CD4-positive, alpha-beta memory T cell (primary cell): ENCODE measurements at regions of chr6 and their contacts with region 1.

Region 1: DNA sequence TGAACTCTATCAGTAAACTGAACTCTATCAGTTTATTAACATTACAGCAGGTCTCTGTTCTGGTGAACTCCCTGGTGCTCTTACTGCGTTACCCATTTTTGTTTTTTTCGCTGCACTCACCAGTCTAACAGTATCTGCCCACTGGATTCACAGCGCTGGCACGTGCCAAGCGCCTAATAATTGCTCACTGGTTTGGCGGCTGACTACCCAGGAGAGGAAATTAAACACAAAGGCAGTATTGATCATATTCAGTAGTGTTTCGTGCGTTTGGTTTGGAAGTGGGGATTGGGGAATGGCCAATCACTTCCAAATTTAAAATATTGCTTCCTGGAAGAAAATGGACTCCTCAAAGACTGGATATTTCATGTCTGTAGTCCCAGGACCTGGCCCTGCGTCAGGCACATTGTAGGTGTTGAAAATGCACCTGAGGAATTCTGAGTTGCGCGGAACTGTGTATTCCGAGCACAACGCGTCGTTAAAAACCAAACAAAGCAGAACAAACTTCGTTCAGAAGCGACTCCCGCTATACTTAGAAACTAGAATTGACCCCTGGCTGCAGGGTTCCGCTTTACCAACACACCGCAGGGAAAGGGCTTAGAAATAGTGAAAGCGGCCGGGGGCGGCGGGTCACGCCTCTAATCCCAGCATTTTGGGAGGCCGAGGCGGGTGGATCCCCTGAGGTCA is 1.1 kb upstream of the RPS12 start:
- DNase-seq: peak; percentile 58 to 67 (median 64)
- H3K4me3 ChIP-seq: peak overlapping the region; percentile 78
- H3K4me3 Mint-ChIP-seq: peak overlapping the region; percentile 94 to 100 (median 98)
- H3K27ac ChIP-seq: peak overlapping the region; percentile 76
- H3K27ac Mint-ChIP-seq: peak overlapping the region; percentile 96 to 99 (median 98)
- H3K4me1 ChIP-seq: peaks cover 40% of the 10 kb centered on the region
- H3K4me1 Mint-ChIP-seq: peaks cover 28 to 58% (median 45%) of the 10 kb centered on the region in 4 donors
- H3K27me3 ChIP-seq: no peaks in the 10 kb centered on the region
- H3K27me3 Mint-ChIP-seq: peaks cover 0 to 2% of the 10 kb centered on the region in 2 donors

Region 2: GRCh38 chr6:132669690-132670291 is 143.5 kb before region 1 on chr6:
- CTCF ChIA-PET with region 1: interaction called, 6 read pairs
- POLR2A ChIA-PET with region 1: interaction called, 3 read pairs
- intact Hi-C with region 1: loop called (anchors 2 kb)
- DNase-seq: peak in 4 of 5 donors; percentile 22 to 39 (median 36)
- H3K4me3 ChIP-seq: no peak overlapping the region
- H3K4me3 Mint-ChIP-seq: no peak overlapping the region
- H3K27ac ChIP-seq: no peak overlapping the region
- H3K27ac Mint-ChIP-seq: no peak overlapping the region
- H3K4me1 ChIP-seq: peaks cover 4% of the 10 kb centered on the region
- H3K4me1 Mint-ChIP-seq: peaks cover 0 to 4% (median 3%) of the 10 kb centered on the region in 4 donors
- H3K27me3 ChIP-seq: no peaks in the 10 kb centered on the region
- H3K27me3 Mint-ChIP-seq: peaks cover 2 to 6% of the 10 kb centered on the region in 2 donors

Region 3: GRCh38 chr6:132734694-132735635 is 78.3 kb before region 1 on chr6:
- CTCF ChIA-PET with region 1: no interaction called
- POLR2A ChIA-PET with region 1: no interaction called
- intact Hi-C with region 1: no loop called
- DNase-seq: no peak
- H3K4me3 ChIP-seq: no peak overlapping the region
- H3K4me3 Mint-ChIP-seq: no peak overlapping the region
- H3K27ac ChIP-seq: no peak overlapping the region
- H3K27ac Mint-ChIP-seq: no peak overlapping the region
- H3K4me1 ChIP-seq: no peaks in the 10 kb centered on the region
- H3K4me1 Mint-ChIP-seq: peaks cover 0 to 10% (median 8%) of the 10 kb centered on the region in 4 donors
- H3K27me3 ChIP-seq: no peaks in the 10 kb centered on the region
- H3K27me3 Mint-ChIP-seq: peaks cover 1 to 2% of the 10 kb centered on the region in 2 donors

Region 4: DNA sequence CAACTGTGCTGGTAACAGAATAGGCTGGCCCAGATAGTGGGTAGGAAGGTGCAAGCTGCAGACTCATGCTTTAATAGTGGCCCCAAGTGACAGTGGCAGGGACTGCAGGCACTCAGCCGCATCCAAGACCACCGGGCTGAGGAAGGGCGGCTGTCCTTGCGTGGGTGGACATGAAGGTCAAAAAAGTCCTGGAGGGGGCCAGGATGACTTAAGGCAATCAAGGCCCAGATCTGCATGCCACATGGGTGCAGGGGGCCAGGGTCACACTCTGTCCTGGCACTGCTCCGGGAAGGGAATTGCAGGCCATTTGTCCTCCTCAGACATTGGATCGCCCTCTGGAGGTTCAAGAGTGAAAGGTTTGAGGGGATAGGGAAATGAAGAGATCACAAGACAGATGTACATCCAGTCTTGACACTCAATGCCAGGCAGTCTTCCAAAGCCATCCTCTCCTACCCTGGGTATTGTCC is 45.2 kb before region 1 on chr6:
- CTCF ChIA-PET with region 1: interaction called, 9 read pairs
- POLR2A ChIA-PET with region 1: interaction called, 62 read pairs
- intact Hi-C with region 1: loop called (anchors 1 kb)
- DNase-seq: no peak
- H3K4me3 ChIP-seq: no peak overlapping the region
- H3K4me3 Mint-ChIP-seq: no peak overlapping the region
- H3K27ac ChIP-seq: no peak overlapping the region
- H3K27ac Mint-ChIP-seq: peak overlapping the region in 1 of 7 donors; percentile 58
- H3K4me1 ChIP-seq: peaks cover 9% of the 10 kb centered on the region
- H3K4me1 Mint-ChIP-seq: peaks cover 8 to 14% (median 11%) of the 10 kb centered on the region in 4 donors
- H3K27me3 ChIP-seq: no peaks in the 10 kb centered on the region
- H3K27me3 Mint-ChIP-seq: peaks cover 0 to 1% of the 10 kb centered on the region in 2 donors

Region 5: DNA sequence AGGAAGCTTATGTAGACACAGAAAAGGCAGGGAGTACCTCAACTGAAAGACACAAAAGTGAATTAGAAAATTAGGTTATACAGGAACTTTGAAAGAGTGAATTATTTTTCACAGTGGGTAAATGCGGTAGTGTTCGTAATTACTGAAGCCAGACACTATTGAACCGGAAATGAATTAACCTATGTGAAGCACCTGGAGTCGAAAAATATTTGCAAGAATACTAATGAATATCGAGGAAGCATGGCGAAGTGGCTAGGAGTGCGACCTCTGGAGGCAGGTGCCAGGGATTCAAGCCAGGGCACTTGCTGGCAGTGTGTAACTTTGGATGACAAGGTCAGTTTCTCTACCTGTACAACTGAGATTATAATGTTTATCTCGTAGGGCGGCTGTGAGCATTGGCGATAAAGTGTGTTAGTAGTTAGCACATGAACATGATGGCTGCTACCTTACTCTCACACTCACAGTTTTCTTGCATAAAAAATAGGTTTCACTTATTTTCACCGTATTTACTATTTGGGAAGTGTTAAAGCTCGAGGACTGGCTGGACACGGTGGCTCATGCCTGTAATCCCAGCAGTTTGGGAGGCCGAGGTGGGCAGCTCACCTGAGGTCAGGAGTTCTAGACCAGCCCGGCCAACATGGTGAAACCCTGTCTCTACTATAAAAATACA is 14.3 kb before region 1 on chr6:
- CTCF ChIA-PET with region 1: interaction called, 60 read pairs
- POLR2A ChIA-PET with region 1: interaction called, 180 read pairs
- intact Hi-C with region 1: loop called (anchors 1 kb)
- DNase-seq: peak; percentile 67 to 75 (median 67)
- H3K4me3 ChIP-seq: peak overlapping the region; percentile 63
- H3K4me3 Mint-ChIP-seq: no peak overlapping the region
- H3K27ac ChIP-seq: no peak overlapping the region
- H3K27ac Mint-ChIP-seq: no peak overlapping the region
- H3K4me1 ChIP-seq: peaks cover 12% of the 10 kb centered on the region
- H3K4me1 Mint-ChIP-seq: peaks cover 19 to 43% (median 30%) of the 10 kb centered on the region in 4 donors
- H3K27me3 ChIP-seq: no peaks in the 10 kb centered on the region
- H3K27me3 Mint-ChIP-seq: no peaks in the 10 kb centered on the region

Region 6: GRCh38 chr6:133952815-133953633 is 1139.7 kb after region 1 on chr6 and contains the start of gene TBPL1:
- CTCF ChIA-PET with region 1: no interaction called
- POLR2A ChIA-PET with region 1: interaction called, 12 read pairs
- intact Hi-C with region 1: loop called (anchors 1 kb)
- DNase-seq: peak; percentile 83 to 92 (median 84)
- H3K4me3 ChIP-seq: peak within 1 kb of the TSS; percentile 85 to 97
- H3K4me3 Mint-ChIP-seq: peak within 1 kb of the TSS; percentile 89 to 99 (median 97)
- H3K27ac ChIP-seq: peak within 1 kb of the TSS; percentile 65
- H3K27ac Mint-ChIP-seq: peak within 1 kb of the TSS; percentile 92 to 98 (median 96)
- H3K4me1 ChIP-seq: peaks cover 50% of the 10 kb centered on the region
- H3K4me1 Mint-ChIP-seq: peaks cover 37 to 55% (median 42%) of the 10 kb centered on the region in 4 donors
- H3K27me3 ChIP-seq: no peaks in the 10 kb centered on the region
- H3K27me3 Mint-ChIP-seq: no peaks in the 10 kb centered on the region
- total RNA-seq, gene TBPL1: 34.8 to 39.2 TPM